Left lung (tissue), 14 donors: ENCODE measurements at regions of chr5 and their contacts with region 1.

Region 1: DNA sequence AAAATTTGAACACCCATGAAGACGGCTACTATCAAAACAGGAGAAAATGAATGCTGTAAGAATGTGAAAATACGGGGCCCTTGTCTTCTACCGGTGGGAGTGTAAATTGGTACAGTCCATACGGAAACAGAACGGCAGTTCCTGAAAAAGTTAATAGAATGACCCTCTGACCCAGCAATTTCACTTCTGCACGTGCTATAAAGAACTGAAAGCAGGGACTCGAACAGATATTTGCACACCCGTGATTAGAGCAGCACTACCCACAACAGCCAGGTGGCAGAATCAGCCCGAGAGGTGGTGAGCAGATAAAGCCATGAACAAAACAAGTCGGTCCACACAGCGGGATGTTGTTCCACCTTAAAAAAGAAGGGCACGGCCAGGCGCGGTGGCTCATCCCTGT is 22.6 kb upstream of the SLC12A7 start:
- DNase-seq: no peak
- ATAC-seq: no peak
- H3K4me3 ChIP-seq: no peak overlapping the region
- H3K27ac ChIP-seq: no peak overlapping the region
- H3K4me1 ChIP-seq: peaks cover 0 to 3% of the 10 kb centered on the region in 2 donors
- H3K27me3 ChIP-seq: no peaks in the 10 kb centered on the region
- CTCF ChIP-seq: no peak

Region 2: DNA sequence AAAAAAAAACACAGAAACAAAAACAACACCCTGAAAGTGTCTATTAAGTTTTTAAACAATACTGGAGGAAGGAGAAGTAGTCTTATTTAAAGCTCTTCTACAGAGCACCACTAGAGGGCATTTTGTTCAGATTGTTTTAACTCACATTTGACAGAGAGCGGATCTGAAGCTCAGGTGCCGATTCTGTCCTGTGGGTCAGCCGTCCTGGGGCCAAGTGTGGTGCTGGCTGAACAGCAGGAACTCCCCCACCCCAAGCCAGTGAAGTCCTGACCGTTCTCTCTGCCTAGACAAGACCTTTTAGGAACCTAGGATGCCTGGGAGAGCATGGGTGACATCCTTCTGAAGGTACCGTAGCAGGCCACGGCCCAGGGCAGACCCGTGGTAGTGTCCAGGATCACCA is 687.6 kb before region 1 on chr5:
- intact Hi-C with region 1: no loop called
- DNase-seq: no peak
- ATAC-seq: peak; percentile 23
- H3K4me3 ChIP-seq: no peak overlapping the region
- H3K27ac ChIP-seq: no peak overlapping the region
- H3K4me1 ChIP-seq: peaks cover 0 to 51% of the 10 kb centered on the region in 2 donors
- H3K27me3 ChIP-seq: no peaks in the 10 kb centered on the region
- CTCF ChIP-seq: peak; percentile 33 to 49

Region 3: GRCh38 chr5:885529-885928 is 248.9 kb before region 1 on chr5:
- intact Hi-C with region 1: no loop called
- DNase-seq: no peak
- ATAC-seq: peak; percentile 41
- H3K4me3 ChIP-seq: no peak overlapping the region
- H3K27ac ChIP-seq: no peak overlapping the region
- H3K4me1 ChIP-seq: peaks cover 0 to 6% of the 10 kb centered on the region in 2 donors
- H3K27me3 ChIP-seq: no peaks in the 10 kb centered on the region
- CTCF ChIP-seq: no peak

Region 4: GRCh38 chr5:989961-990530 is 144.4 kb before region 1 on chr5:
- intact Hi-C with region 1: loop called in 1 of 2 experiments (anchors 10 kb)
- DNase-seq: peak in 3 of 4 donors; percentile 65 to 88 (median 78)
- ATAC-seq: peak; percentile 70
- H3K4me3 ChIP-seq: no peak overlapping the region
- H3K27ac ChIP-seq: peak overlapping the region; percentile 42 to 63
- H3K4me1 ChIP-seq: peaks cover 7 to 8% of the 10 kb centered on the region in 2 donors
- H3K27me3 ChIP-seq: peaks cover 0 to 34% of the 10 kb centered on the region in 2 donors
- CTCF ChIP-seq: peak in 1 of 2 donors; percentile 32